CD14-positive monocyte (primary cell): ENCODE measurements at regions of chr11 and their contacts with region 1.

Region 1: GRCh38 chr11:128884703-128885338 is 6.3 kb upstream of the KCNJ5 start:
- DNase-seq: peak; percentile 44 to 61 (median 54)
- H3K4me3 ChIP-seq: no peak overlapping the region
- H3K4me3 Mint-ChIP-seq: no peak overlapping the region
- H3K27ac ChIP-seq: no peak overlapping the region
- H3K27ac Mint-ChIP-seq: no peak overlapping the region
- H3K4me1 ChIP-seq: peaks cover 6 to 9% of the 10 kb centered on the region in 2 donors
- H3K4me1 Mint-ChIP-seq: peaks cover 16% of the 10 kb centered on the region
- H3K27me3 ChIP-seq: peaks cover 7 to 16% of the 10 kb centered on the region in 2 donors
- H3K27me3 Mint-ChIP-seq: peaks cover 9 to 23% (median 19%) of the 10 kb centered on the region in 3 donors
- CTCF ChIP-seq: peak; percentile 90

Region 2: DNA sequence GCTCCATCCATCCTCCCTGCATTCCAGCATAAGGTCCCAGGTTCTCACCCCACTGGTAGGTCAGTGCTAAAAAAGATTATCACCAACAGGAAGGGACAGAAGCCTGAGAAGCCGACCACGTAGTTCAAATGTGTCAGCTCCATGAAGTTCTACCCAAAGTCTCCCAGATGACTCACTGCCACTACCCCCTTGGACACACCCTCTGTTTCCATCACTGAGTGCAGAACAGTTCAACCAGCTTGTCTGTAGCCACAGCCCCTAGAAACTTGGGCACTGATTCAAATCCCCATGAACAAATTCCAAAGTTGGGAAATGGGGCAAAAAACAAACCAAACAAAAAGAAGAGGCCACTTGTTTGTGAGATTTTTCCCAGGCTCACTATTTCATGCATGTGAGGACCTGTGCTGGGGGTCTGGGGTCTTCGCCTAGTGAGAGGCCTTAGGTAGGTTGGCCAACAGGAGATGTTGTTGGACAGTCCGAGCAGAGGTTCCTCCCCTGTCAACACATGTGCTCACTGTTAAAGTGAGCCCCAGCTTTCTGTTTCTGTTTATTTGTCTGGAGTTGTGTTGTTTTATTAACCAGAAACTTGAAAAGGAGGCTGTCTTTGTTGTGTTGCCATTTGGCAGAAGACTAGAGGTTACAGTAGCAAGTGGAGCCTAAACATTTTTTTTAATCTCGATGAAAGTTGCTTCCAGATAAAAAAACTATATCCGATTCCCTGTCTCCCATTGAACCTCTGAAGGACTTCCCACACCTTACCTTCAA is 215.1 kb before region 1 on chr11:
- intact Hi-C with region 1: no loop called
- DNase-seq: peak in 1 of 3 donors; percentile 52
- H3K4me3 ChIP-seq: no peak overlapping the region
- H3K4me3 Mint-ChIP-seq: no peak overlapping the region
- H3K27ac ChIP-seq: no peak overlapping the region
- H3K27ac Mint-ChIP-seq: peak overlapping the region in 1 of 7 donors; percentile 42
- H3K4me1 ChIP-seq: peaks cover 7 to 15% of the 10 kb centered on the region in 2 donors
- H3K4me1 Mint-ChIP-seq: peaks cover 34% of the 10 kb centered on the region
- H3K27me3 ChIP-seq: no peaks in the 10 kb centered on the region
- H3K27me3 Mint-ChIP-seq: peaks cover 0 to 2% (median 0%) of the 10 kb centered on the region in 3 donors
- CTCF ChIP-seq: no peak

Region 3: GRCh38 chr11:128956401-128957201 is 71.8 kb after region 1 on chr11:
- intact Hi-C with region 1: loop called (anchors 2 kb)
- DNase-seq: peak; percentile 21 to 72 (median 47)
- H3K4me3 ChIP-seq: no peak overlapping the region
- H3K4me3 Mint-ChIP-seq: no peak overlapping the region
- H3K27ac ChIP-seq: no peak overlapping the region
- H3K27ac Mint-ChIP-seq: no peak overlapping the region
- H3K4me1 ChIP-seq: no peaks in the 10 kb centered on the region
- H3K4me1 Mint-ChIP-seq: peaks cover 2% of the 10 kb centered on the region
- H3K27me3 ChIP-seq: no peaks in the 10 kb centered on the region
- H3K27me3 Mint-ChIP-seq: peaks cover 0 to 9% (median 7%) of the 10 kb centered on the region in 3 donors
- CTCF ChIP-seq: peak; percentile 83